Activated CD4-positive, alpha-beta T cell treated with anti-CD3 and anti-CD28 coated beads for 36 hours (primary cell): ENCODE measurements at regions of chr6 and their contacts with region 1.

Region 1: DNA sequence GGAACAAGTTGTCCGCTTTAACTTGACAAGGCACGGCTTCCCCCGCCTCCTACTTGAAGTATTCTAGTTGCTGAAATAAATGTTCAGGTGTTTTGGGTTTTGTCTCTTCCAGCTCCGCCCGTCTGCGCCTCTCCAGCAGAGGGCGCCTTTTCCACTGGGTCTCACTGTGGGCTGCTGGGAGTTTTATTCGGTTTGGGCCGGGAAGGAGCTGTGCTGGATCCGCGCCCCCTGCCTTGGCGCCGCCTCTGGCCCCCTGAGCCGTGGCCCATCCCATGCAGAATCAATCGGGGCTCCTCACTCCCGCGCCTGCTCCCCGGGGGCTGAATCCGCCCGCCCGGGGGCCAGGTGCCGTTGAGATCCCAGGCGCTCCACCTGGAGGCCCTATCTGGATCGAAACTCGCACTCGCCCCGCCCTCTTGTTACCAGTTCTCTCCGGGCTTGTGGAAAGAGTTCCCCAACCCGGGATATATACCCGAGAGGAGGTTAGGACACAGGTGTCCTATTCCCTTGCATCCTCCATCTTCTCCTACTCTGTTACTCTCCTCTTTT is 51.0 kb upstream of the TCF21 start:
- DNase-seq: peak; percentile 81
- ATAC-seq: peak; percentile 74
- H3K4me3 Mint-ChIP-seq: peak overlapping the region; percentile 32
- H3K27ac Mint-ChIP-seq: no peak overlapping the region
- H3K4me1 Mint-ChIP-seq: peaks cover 5% of the 10 kb centered on the region
- H3K27me3 Mint-ChIP-seq: peaks cover 18% of the 10 kb centered on the region

Region 2: DNA sequence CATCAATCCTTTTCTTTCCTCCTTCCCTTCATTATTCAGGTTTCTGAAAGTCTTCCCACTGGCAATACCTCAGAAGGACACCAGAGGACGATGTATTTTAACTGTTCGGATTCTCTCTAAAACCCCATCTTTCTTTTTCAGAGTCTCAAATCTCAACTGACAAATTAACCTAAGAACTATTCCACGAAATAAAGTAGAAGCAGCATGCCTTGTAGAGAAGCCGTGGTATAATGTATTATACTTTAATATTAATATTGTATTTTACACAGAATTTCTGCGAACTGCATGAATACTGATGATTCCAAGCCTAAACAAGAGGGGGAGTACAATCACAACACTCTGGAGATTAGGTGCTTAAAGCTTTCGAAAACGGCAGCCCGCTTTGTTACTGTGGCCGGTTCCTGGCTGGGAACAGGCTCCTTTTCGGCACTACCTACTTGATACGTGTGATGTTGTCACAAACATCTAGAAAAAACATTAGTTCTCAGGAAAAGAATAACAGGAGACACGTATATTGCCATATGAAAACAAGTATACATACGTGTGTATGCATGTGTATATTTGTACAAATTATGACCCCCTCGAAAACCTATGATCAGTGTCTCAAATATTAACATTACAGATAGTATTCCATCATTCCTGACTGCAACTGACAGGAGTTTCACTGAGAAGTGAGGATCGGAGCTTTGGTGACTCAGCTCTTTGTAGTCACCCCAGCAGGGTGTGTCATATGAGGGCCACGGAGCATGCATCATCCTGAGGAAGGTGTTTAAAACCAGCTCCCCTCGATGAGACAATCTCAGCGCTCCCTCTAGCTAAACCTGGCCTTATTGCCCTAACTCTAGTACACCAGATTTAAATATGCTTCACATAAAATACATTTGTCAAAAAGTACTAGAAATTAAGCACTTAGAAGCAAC is 268.6 kb before region 1 on chr6:
- CTCF ChIA-PET with region 1: interaction called, 5 read pairs
- POLR2A ChIA-PET with region 1: no interaction called
- intact Hi-C with region 1: loop called in 1 of 2 experiments (anchors 5 kb)
- DNase-seq: peak; percentile 61
- ATAC-seq: peak; percentile 99
- H3K4me3 Mint-ChIP-seq: peak overlapping the region; percentile 40
- H3K27ac Mint-ChIP-seq: no peak overlapping the region
- H3K4me1 Mint-ChIP-seq: peaks cover 7% of the 10 kb centered on the region
- H3K27me3 Mint-ChIP-seq: peaks cover 28% of the 10 kb centered on the region